Caco-2 (cell line): ENCODE measurements at regions of chr1 and their contacts with region 1.

Region 1: DNA sequence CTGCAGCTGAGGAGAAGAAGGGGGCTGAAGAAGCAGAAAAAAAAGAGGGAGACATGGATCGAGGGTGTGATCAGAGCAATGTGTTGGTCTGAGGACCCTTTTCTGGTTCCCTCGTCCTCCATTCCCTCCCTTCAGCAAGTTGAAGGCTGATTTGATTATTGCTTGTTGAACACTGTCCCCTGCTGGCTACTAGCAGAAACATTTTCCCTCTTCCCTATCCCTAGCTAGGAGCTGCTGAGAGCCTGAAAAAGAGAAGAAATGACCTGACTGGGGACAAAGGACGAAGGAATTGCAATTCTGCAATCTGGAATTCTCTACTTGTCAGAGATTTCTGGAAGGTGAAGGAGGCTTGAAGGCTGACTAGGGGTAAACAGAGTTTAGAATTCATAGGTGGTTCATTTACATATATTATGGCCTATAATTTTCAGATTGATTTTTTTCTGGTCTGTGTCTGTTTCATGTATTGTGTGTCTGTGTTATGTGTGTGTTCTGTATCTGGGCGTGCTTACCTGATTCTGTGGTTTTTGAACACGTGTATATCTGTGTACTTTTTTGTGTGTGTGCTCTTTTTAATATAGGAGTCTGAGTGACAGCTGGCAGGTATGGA is 9.8 kb downstream of the NHLH1 start:
- DNase-seq: peak; percentile 51 to 62
- H3K4me3 ChIP-seq: no peak overlapping the region
- H3K4me3 Mint-ChIP-seq: no peak overlapping the region
- H3K27ac Mint-ChIP-seq: no peak overlapping the region
- H3K4me1 ChIP-seq: no peaks in the 10 kb centered on the region
- H3K4me1 Mint-ChIP-seq: peaks cover 13% of the 10 kb centered on the region
- H3K27me3 ChIP-seq: no peaks in the 10 kb centered on the region
- H3K27me3 Mint-ChIP-seq: peaks cover 6% of the 10 kb centered on the region
- CTCF ChIP-seq: peak; percentile 67 to 91

Region 2: DNA sequence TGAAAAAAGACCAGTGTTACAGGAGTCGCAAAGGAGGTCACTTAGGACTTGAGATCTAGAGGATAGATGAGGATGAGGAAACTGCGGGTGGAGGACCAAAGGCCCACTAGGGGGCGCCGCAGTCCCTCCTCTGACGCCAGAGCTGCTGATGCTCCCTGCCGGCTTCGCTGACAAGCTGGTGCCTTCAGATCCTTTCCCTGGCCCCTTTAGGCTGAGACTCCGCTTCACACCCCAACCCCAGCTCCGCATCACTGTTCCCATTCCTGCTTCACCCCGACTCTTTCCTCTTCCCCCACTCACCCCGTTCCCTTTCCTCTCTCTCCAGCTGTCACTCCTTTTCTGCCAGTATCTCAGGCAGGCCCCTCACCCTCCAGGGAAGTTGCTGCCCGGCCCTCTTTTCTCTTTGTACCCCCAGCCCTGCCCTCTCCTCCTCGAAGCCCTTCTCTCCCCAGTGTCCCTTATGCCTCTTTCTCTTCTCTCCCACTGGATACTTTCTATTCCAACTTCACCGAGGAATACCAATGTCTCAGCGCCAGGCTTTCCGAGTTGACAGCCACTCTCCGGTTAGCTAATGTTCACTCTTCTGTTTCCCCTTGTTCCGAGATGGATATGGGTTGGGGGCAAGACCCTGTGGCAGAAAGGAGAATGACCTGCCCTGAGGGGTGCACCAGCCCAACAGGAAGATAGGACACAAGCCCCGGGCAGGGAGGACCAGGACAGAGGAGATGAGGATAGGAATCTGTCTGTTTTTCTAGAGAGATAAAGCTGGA is 290.8 kb before region 1 on chr1:
- CTCF ChIA-PET with region 1: interaction called, 11 read pairs
- POLR2A ChIA-PET with region 1: no interaction called
- intact Hi-C with region 1: no loop called
- DNase-seq: peak; percentile 72 to 82
- H3K4me3 ChIP-seq: no peak overlapping the region
- H3K4me3 Mint-ChIP-seq: no peak overlapping the region
- H3K27ac Mint-ChIP-seq: no peak overlapping the region
- H3K4me1 ChIP-seq: no peaks in the 10 kb centered on the region
- H3K4me1 Mint-ChIP-seq: peaks cover 7% of the 10 kb centered on the region
- H3K27me3 ChIP-seq: no peaks in the 10 kb centered on the region
- H3K27me3 Mint-ChIP-seq: peaks cover 8% of the 10 kb centered on the region
- CTCF ChIP-seq: peak; percentile 82 to 87

Region 3: GRCh38 chr1:160261893-160262794 is 114.5 kb before region 1 on chr1 and contains the start of gene DCAF8:
- CTCF ChIA-PET with region 1: no interaction called
- POLR2A ChIA-PET with region 1: no interaction called
- intact Hi-C with region 1: no loop called
- DNase-seq: peak; percentile 98
- H3K4me3 ChIP-seq: peak within 1 kb of the TSS; percentile 99
- H3K4me3 Mint-ChIP-seq: peak within 1 kb of the TSS; percentile 92
- H3K27ac Mint-ChIP-seq: peak within 1 kb of the TSS; percentile 97
- H3K4me1 ChIP-seq: no peaks in the 10 kb centered on the region
- H3K4me1 Mint-ChIP-seq: peaks cover 15% of the 10 kb centered on the region
- H3K27me3 ChIP-seq: no peaks in the 10 kb centered on the region
- H3K27me3 Mint-ChIP-seq: no peaks in the 10 kb centered on the region
- CTCF ChIP-seq: no peak
- total RNA-seq, gene DCAF8: 112 and 116 TPM in 2 replicates

Region 4: DNA sequence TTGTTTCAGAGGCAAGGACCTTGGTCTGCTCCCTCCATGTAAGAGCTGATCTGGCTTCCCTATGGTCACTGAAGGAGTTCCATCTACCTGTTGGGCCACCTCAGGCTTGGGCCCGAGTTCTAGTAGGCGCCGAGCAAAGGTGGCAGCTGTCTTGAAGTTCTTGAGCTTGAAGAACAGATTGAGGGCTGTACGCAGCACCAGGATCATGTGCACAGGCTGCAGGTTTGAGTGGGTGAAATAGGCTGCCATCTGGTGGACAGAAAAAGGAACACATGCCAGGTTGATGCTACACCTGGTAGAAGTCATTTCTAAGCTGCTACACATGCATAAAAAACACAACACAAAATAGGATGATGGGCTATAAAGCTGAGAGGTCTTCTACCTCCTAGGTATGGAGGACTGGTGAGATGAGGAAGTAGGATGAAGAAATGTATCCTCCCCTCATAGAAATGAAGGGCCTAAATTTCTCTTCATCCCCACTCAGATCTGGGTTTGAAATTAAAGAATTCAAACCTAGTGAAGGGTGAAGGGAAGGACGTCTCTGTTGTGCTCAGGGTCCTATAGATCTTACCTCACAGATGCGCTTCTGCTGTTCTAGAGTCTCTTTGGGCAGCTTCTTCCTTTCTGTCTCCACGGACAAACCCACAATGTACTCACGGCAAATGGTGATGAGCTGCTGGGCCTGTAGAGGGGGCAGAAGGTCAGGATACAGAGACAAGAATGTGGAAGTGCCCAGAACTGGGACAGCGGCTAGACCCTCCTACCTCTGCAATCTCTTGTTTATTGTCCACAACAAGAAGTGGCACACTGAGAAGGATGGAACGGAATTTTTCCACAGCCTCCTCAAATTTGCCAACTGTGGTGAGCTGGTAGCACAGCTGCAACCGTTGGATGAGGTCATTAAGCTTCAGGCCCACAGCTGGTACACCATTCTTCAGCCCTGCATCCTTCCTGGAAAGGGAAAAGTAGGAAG is 85.1 kb before region 1 on chr1:
- CTCF ChIA-PET with region 1: interaction called, 24 read pairs
- POLR2A ChIA-PET with region 1: no interaction called
- intact Hi-C with region 1: loop called (anchors 10 kb)
- DNase-seq: peak; percentile 71 to 72
- H3K4me3 ChIP-seq: no peak overlapping the region
- H3K4me3 Mint-ChIP-seq: no peak overlapping the region
- H3K27ac Mint-ChIP-seq: no peak overlapping the region
- H3K4me1 ChIP-seq: no peaks in the 10 kb centered on the region
- H3K4me1 Mint-ChIP-seq: peaks cover 4% of the 10 kb centered on the region
- H3K27me3 ChIP-seq: no peaks in the 10 kb centered on the region
- H3K27me3 Mint-ChIP-seq: no peaks in the 10 kb centered on the region
- CTCF ChIP-seq: peak; percentile 66 to 77

Region 5: DNA sequence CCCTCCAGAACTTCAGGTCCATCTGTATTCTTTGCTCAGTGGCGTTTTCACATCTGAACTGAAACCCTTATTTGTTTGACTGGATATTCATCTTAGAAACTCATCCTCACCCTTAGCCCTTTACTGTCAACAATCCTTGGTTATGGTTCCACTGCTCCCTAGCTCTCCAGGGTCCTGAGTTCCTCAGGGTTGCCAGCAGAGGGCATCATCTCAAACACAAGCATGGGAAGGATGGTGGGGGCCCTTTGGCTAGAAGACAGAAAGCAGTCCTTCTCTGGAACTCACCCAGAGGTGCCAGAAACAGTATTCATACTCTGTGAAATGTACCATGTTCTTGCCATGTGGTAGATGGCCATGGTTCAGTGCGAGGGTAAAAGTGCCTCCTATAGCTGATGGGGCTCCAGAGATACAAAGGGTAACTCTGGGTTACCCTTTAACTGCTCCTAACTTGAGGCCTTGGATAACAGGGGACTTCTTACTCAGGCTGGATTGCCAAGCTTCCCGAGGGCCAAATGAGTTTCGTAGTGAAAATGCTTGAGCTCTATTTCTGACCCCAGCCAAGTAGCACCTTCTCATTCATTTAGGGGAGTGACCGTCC is 22.1 kb before region 1 on chr1:
- CTCF ChIA-PET with region 1: interaction called, 15 read pairs
- POLR2A ChIA-PET with region 1: no interaction called
- intact Hi-C with region 1: loop called (anchors 1 kb)
- DNase-seq: peak in 1 of 2 experiments; percentile 37
- H3K4me3 ChIP-seq: no peak overlapping the region
- H3K4me3 Mint-ChIP-seq: no peak overlapping the region
- H3K27ac Mint-ChIP-seq: no peak overlapping the region
- H3K4me1 ChIP-seq: no peaks in the 10 kb centered on the region
- H3K4me1 Mint-ChIP-seq: no peaks in the 10 kb centered on the region
- H3K27me3 ChIP-seq: no peaks in the 10 kb centered on the region
- H3K27me3 Mint-ChIP-seq: no peaks in the 10 kb centered on the region
- CTCF ChIP-seq: peak; percentile 32 to 63

Region 6: DNA sequence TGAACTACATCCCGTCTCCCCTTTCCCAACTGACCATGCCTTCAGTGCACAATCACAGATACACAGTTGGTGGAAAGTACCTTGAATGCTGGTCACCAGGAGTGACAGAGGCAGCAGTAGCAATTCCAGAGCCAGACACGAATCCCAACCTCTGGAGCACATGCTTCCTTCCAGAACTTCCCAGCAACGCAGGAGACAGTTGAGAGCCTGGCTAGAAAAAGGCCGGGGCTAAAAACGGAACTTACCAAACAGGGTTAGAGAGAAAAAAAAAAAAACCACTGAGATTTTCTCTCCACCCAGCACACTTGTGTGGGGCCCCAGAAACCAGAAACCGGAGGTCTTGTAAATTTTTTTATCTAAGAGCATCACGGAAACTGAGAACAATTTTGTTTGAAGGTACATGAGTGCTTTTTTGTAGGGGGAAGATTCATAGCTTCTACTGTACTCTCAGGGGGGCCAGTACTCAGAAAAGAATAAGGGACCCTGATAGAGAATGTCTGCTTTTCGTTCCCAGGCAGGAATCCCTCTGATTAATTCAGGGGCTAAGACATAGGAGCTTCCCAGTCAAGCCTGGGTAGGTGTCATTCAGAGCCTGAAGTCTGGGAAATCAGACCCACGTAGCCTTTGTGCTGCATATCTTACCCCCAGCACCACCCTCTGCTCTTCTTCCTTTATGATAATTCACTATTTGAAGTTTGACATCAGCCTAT is 335.1 kb after region 1 on chr1 and contains the start of gene CD48:
- CTCF ChIA-PET with region 1: no interaction called
- POLR2A ChIA-PET with region 1: no interaction called
- intact Hi-C with region 1: no loop called
- DNase-seq: no peak
- H3K4me3 ChIP-seq: no peak within 1 kb of the TSS
- H3K4me3 Mint-ChIP-seq: no peak within 1 kb of the TSS
- H3K27ac Mint-ChIP-seq: no peak within 1 kb of the TSS
- H3K4me1 ChIP-seq: no peaks in the 10 kb centered on the region
- H3K4me1 Mint-ChIP-seq: no peaks in the 10 kb centered on the region
- H3K27me3 ChIP-seq: no peaks in the 10 kb centered on the region; the same call in 1 of the 2 replicates
- H3K27me3 Mint-ChIP-seq: peaks cover 3% of the 10 kb centered on the region
- CTCF ChIP-seq: no peak
- total RNA-seq, gene CD48: not detected in 2 replicates